Activated CD4-positive, alpha-beta T cell treated with anti-CD3 and anti-CD28 coated beads for 36 hours (primary cell): ENCODE measurements at regions of chr6 and their contacts with region 1.

Region 1: DNA sequence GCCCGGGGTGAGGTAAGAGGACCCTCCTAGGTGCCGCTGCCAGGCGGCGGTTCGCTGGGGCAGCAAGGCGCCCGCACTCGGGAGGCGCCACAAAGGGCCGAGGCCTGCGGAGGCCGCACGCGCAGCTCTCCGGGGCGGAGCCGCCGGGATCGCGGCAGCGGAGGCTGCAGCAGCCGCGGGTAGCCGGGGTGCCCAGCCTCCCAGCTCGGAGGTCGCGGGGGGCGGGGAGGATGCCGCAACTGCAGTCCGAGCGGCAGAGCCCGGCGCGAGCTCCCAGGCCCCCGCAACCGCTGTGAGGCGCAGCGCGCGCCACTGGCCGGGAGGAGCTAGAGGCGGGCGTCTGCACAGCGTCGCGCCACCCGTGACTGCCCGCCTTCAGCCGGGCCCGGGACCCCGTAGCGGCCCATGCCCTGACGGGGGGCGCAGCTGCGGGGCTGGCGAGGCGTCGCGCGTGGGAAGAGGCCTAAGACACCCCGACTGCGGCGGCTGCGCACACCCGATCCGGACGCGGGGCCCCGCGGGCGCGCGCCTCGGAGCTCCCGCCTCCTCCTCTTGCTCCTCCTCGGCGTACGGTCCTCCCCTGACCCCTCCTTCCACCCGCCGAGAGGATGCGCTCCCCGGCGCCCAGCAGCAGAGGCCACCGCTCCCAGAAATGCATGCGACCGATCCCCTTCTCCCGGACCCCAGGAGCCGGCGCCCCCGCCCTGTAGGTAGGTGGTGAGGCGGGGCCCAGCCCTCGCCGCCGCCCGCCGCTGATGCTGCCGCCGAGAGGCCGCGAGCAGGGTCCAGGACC is at the start of gene NCOA7:
- DNase-seq: peak; percentile 89
- ATAC-seq: peak; percentile 76
- H3K4me3 Mint-ChIP-seq: peak within 1 kb of the TSS; percentile 96
- H3K27ac Mint-ChIP-seq: peak within 1 kb of the TSS; percentile 95
- H3K4me1 Mint-ChIP-seq: peaks cover 52% of the 10 kb centered on the region
- H3K27me3 Mint-ChIP-seq: no peaks in the 10 kb centered on the region
- total RNA-seq, gene NCOA7: 54.3 to 67.4 TPM

Region 2: DNA sequence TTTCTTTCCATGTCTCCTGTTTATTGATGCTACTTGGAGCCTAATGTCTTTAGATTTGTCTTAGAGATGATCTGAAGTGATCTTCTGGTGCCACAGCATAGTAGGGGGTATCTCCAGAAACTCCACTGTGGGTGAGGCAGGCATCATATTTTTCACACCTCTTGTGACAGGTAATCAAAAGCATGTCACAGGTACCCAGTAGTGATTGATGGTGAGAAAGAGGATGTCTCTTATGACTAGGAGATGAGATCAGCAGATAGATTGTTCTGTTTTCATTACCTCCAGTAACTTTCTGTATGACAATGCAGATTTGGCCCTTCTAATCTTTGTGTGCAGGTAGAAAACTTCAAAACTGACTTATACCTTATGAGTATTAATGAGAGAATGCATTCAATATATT is 13.7 kb after region 1 on chr6:
- CTCF ChIA-PET with region 1: interaction called, 33 read pairs
- POLR2A ChIA-PET with region 1: interaction called, 6 read pairs
- intact Hi-C with region 1: loop called (anchors 1 kb)
- DNase-seq: peak; percentile 54
- ATAC-seq: peak; percentile 79
- H3K4me3 Mint-ChIP-seq: no peak overlapping the region
- H3K27ac Mint-ChIP-seq: no peak overlapping the region
- H3K4me1 Mint-ChIP-seq: peaks cover 67% of the 10 kb centered on the region
- H3K27me3 Mint-ChIP-seq: no peaks in the 10 kb centered on the region

Region 3: GRCh38 chr6:125918681-125919566 is 128.4 kb after region 1 on chr6:
- CTCF ChIA-PET with region 1: interaction called, 22 read pairs
- POLR2A ChIA-PET with region 1: interaction called, 21 read pairs
- intact Hi-C with region 1: loop called (anchors 1 kb)
- DNase-seq: peak; percentile 68
- ATAC-seq: peak; percentile 96
- H3K4me3 Mint-ChIP-seq: peak overlapping the region; percentile 84
- H3K27ac Mint-ChIP-seq: peak overlapping the region; percentile 98
- H3K4me1 Mint-ChIP-seq: peaks cover 37% of the 10 kb centered on the region
- H3K27me3 Mint-ChIP-seq: no peaks in the 10 kb centered on the region

Region 4: GRCh38 chr6:125986300-125987025 is 195.9 kb after region 1 on chr6 and contains the start of gene TRMT11:
- CTCF ChIA-PET with region 1: interaction called, 12 read pairs
- POLR2A ChIA-PET with region 1: no interaction called
- intact Hi-C with region 1: loop called in 1 of 2 experiments (anchors 2 kb)
- DNase-seq: peak; percentile 89
- ATAC-seq: peak; percentile 96
- H3K4me3 Mint-ChIP-seq: no peak within 1 kb of the TSS
- H3K27ac Mint-ChIP-seq: peak within 1 kb of the TSS; percentile 20
- H3K4me1 Mint-ChIP-seq: peaks cover 7% of the 10 kb centered on the region
- H3K27me3 Mint-ChIP-seq: no peaks in the 10 kb centered on the region
- total RNA-seq, gene TRMT11: 33.4 to 40.5 TPM